ENCODE measurements at regions of chr3 and their contacts with region 1.

Region 1: DNA sequence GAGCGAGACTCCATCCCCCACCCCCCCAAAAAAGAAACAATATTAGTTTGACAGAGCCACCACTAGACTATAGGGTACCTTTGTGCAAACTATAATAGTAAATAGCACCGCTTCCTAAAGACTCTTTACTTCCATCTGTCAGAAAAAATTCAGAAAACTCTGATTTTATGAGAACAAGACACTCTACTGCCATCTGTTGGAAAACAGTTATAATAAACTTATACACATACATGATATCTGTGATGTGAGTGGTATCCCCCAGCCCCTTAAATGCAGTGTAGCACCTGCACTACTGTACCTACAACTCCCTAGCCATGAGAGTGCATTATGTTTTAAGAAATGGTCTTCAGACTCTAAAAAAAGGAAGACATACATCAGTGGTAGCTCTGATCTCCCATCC is 47.1 kb upstream of the CTDSPL start:
- DNase-seq: peak; percentile 3
- H3K4me3 Mint-ChIP-seq: no peak overlapping the region
- H3K27ac Mint-ChIP-seq: no peak overlapping the region
- H3K4me1 Mint-ChIP-seq: no peaks in the 10 kb centered on the region
- H3K27me3 Mint-ChIP-seq: no peaks in the 10 kb centered on the region
- CTCF ChIP-seq: peak; percentile 5

Region 2: GRCh38 chr3:37803726-37804469 is 10.6 kb before region 1 on chr3:
- CTCF ChIA-PET with region 1: interaction called, 24 read pairs
- POLR2A ChIA-PET with region 1: no interaction called
- intact Hi-C with region 1: no loop called
- DNase-seq: no peak
- H3K4me3 Mint-ChIP-seq: no peak overlapping the region
- H3K27ac Mint-ChIP-seq: no peak overlapping the region
- H3K4me1 Mint-ChIP-seq: no peaks in the 10 kb centered on the region
- H3K27me3 Mint-ChIP-seq: no peaks in the 10 kb centered on the region
- CTCF ChIP-seq: no peak

Region 3: DNA sequence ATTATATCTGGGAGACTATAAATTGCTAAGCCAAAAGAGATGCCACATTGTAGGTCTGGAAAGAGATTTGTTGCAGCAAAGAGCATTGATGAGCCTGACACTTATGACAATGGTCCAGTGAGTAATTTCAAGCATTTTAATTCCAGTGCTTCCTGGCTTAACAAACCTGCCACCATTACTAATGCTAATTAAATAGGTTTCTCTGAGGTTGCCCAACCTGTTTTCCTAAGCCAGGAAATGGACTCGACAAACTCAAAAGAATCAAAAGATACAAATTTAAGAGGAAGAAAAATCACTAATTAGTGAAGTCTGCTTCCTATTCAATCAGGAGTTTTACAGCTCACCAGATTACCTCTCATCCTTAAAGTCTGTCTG is 10.4 kb after region 1 on chr3:
- CTCF ChIA-PET with region 1: interaction called, 12 read pairs
- POLR2A ChIA-PET with region 1: no interaction called
- intact Hi-C with region 1: no loop called
- DNase-seq: no peak
- H3K4me3 Mint-ChIP-seq: no peak overlapping the region
- H3K27ac Mint-ChIP-seq: no peak overlapping the region
- H3K4me1 Mint-ChIP-seq: no peaks in the 10 kb centered on the region
- H3K27me3 Mint-ChIP-seq: no peaks in the 10 kb centered on the region
- CTCF ChIP-seq: no peak

Measured in MCF 10A (cell line).